Dorsolateral prefrontal cortex (tissue), 120 donors: ENCODE measurements at regions of chr16 and their contacts with region 1.

Region 1: DNA sequence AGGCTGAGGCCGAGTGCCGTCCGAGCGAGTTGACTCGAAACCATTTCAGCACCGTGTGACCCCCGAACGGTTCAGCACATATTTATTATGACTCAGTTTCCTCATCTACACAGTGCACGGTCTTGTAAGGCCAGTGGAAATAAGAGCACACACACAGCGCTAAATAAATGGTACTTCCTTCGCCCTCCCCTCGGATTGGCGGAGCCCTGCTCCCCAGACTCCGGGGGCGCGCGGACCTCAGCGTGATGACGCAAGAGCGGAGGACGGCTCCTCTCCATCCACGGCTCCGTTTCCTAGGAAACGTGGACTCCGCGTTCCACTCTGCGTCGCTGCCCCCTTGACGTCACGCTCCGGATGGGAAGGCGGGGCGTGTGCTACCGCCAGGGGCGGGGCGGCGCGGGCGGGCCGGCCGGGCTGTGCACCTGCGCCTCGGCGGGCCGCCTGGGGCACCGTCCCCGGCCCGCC is at the start of gene PARD6A:
- DNase-seq: peak; percentile 90 to 98 (median 98)
- H3K4me3 ChIP-seq: peak within 1 kb of the TSS; percentile 57 to 100 (median 92)
- H3K27ac ChIP-seq: peak within 1 kb of the TSS; percentile 82 to 99 (median 97)
- H3K27me3 ChIP-seq: no peaks in the 10 kb centered on the region
- CTCF ChIP-seq: peak in 13 of 56 donors; percentile 2 to 29 (median 8)
- total RNA-seq, gene PARD6A: 13.9 to 52.7 (median 27.3) TPM

Region 2: DNA sequence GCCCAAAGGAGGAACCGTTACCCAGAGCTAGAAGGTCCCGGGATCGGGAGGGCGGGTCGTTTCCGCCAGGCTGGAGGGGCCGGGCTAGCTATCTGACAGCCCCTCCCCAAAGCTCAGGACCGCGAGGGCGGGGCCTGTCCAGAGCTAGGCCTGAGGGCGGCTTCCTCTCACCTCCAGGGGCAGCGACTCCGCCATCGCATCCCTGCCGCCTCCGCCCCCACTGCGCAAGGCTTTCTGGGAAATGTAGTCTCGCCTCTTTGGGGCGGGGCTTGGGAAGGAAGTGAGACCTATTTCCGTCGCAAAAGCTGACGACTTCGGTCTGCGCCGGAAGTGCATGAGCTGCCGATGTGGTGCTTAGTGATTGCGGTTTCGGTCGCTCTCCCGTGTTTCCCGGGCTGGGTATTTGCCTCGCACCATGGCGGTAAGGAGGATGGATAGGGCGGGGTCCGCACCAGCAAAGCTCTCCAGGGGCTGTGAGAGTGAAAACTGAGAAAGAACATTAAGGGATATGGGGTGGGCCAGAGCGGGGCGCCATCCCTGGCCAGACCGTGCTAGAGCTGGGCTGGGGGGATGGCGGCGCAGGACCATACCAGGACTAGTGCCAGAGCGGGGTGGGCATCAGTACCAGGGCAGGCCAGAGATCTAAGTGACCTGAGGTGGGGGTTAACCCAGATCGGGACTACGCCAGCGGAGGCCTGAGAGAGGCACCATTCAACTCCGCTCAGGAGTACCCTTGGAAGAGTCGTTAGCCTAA is 433.6 kb before region 1 on chr16 and contains the start of gene TMEM208:
- intact Hi-C with region 1: loop called in 1 of 2 experiments (anchors 5 kb)
- DNase-seq: peak; percentile 94 to 98 (median 97)
- H3K4me3 ChIP-seq: peak within 1 kb of the TSS; percentile 61 to 100 (median 97)
- H3K27ac ChIP-seq: peak within 1 kb of the TSS in 54 of 59 donors; percentile 17 to 94 (median 78)
- H3K27me3 ChIP-seq: no peaks in the 10 kb centered on the region
- CTCF ChIP-seq: peak in 49 of 56 donors; percentile 3 to 63 (median 43)
- total RNA-seq, gene TMEM208: 16.2 to 40.3 (median 28.1) TPM

Region 3: DNA sequence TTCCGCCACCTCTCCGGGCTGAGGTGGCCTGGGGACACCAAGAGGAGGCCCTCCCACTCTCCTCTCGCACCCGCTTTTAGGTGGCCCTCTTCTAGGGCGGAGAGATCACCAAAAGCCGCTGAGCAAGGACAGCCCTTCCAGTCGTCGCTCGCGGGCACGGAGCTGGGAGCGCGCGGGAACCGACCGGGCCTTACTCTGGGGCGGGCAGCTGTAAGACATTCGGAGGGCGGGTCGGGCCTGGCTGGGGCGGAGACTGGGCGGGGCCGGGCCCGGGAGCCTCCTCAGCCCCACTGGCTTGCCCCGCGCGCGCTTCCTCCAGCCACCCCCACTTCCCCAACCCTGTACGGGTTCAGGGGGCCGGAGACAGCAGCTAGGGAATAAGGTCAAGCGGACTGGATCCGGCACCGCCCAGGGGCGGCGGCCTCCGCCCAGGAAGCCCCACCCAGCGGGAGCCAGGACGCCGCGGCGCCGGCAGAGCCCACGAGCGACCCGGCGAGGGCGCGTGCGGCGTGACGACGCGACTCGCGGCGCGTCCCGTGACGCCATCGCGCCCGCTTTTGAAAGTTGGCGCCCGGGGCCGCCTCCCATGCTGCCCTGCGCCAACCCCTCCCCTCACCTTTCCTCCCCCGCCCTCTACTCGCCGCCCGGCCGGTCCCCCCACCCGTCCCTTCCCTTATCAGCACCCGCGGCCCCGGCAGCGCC is 98.6 kb before region 1 on chr16:
- intact Hi-C with region 1: loop called (anchors 1 to 2 kb)
- DNase-seq: peak; percentile 79 to 93 (median 88)
- H3K4me3 ChIP-seq: peak overlapping the region; percentile 40 to 100 (median 92)
- H3K27ac ChIP-seq: peak overlapping the region; percentile 31 to 100 (median 99)
- H3K27me3 ChIP-seq: no peaks in the 10 kb centered on the region
- CTCF ChIP-seq: peak in 21 of 56 donors; percentile 6 to 46 (median 23)

Region 4: GRCh38 chr16:67846320-67847063 is 185.9 kb after region 1 on chr16 and contains the start of gene NUTF2:
- intact Hi-C with region 1: no loop called
- DNase-seq: peak; percentile 90 to 95 (median 94)
- H3K4me3 ChIP-seq: peak within 1 kb of the TSS; percentile 59 to 100 (median 98)
- H3K27ac ChIP-seq: peak within 1 kb of the TSS; percentile 84 to 100 (median 98)
- H3K27me3 ChIP-seq: no peaks in the 10 kb centered on the region
- CTCF ChIP-seq: peak in 30 of 56 donors; percentile 3 to 60 (median 30)
- total RNA-seq, gene NUTF2: 51.7 to 88.9 (median 72.2) TPM